Activated CD4-positive, alpha-beta T cell treated with anti-CD3 and anti-CD28 coated beads, Interleukin-2, amount 10 ng/mL, durations not matched to agents 7 days and 5 days (primary cell): ENCODE measurements at regions of chr1 and their contacts with region 1.

Region 1: GRCh38 chr1:156065212-156065611 is 4.3 kb downstream of the RAB25 start:
- DNase-seq: no peak
- H3K4me3 Mint-ChIP-seq: no peak overlapping the region
- H3K27ac Mint-ChIP-seq: no peak overlapping the region
- H3K4me1 Mint-ChIP-seq: peaks cover 16% of the 10 kb centered on the region
- H3K27me3 Mint-ChIP-seq: no peaks in the 10 kb centered on the region

Region 2: DNA sequence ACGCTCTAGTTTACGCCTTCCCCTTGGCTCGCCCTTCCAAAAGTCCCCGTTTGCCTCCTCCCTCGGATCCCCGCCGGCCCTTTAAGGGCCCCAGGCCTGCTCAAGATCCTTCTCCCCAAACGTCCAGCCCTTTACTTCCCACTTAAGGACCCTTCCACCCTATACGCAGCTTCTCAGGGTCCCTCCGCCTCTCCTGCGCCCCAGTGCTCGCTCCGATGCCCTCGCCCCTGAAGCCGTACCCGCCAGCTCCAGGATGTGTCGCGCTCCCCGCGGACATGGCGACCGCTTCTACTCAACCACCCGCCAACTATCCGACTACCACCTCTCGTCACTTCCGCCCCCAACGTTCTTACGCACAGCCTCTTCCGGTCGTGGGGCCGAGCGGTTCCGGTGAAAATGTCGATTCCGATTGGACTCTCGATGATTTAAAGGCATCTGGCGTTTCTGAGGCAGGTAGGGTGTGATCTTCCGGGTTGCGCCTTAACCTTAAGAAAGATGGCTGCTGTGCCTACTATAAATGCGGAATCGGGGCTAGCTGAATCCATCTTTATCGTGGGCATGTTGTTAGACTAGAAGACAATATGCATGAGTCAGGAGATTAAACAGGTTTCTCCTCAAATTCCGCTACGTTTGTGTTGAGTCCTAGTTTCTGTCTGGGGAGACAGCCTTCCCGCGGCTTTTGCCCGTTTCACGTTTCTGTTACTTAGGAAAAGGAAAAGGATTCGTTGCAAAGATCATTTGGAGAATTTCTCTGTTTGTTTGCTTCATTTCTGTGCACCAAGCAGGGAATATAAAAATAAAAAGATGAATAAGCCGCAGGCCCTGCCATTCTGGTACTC is 130.9 kb before region 1 on chr1 and contains the start of gene KHDC4:
- CTCF ChIA-PET with region 1: interaction called, 11 read pairs
- POLR2A ChIA-PET with region 1: no interaction called
- DNase-seq: peak; percentile 98
- H3K4me3 Mint-ChIP-seq: no peak within 1 kb of the TSS
- H3K27ac Mint-ChIP-seq: no peak within 1 kb of the TSS
- H3K4me1 Mint-ChIP-seq: peaks cover 45% of the 10 kb centered on the region
- H3K27me3 Mint-ChIP-seq: no peaks in the 10 kb centered on the region
- total RNA-seq, gene KHDC4: 66.3 to 67.3 TPM

Region 3: DNA sequence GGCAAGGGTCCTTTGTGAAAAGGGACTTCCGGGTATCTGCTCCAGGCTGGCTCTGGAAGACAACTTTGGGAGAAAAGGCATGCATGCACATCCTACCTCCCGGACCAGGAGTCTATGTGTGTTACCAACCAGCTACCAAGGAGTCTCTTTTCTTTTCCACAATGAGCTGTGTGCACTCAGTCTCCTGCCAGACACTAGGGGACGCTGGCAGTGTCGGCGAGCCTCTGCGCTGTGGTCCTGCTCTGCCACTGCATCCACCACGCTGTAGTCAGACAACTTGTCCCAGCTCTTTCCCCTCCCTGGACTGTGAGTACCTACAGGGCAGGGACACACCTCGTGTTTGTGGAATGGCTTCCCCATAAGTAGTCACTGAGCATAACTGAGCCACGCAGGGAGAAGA is 39.3 kb before region 1 on chr1:
- CTCF ChIA-PET with region 1: interaction called, 12 read pairs
- POLR2A ChIA-PET with region 1: no interaction called
- DNase-seq: peak; percentile 33
- H3K4me3 Mint-ChIP-seq: no peak overlapping the region
- H3K27ac Mint-ChIP-seq: no peak overlapping the region
- H3K4me1 Mint-ChIP-seq: peaks cover 14% of the 10 kb centered on the region
- H3K27me3 Mint-ChIP-seq: no peaks in the 10 kb centered on the region

Region 4: DNA sequence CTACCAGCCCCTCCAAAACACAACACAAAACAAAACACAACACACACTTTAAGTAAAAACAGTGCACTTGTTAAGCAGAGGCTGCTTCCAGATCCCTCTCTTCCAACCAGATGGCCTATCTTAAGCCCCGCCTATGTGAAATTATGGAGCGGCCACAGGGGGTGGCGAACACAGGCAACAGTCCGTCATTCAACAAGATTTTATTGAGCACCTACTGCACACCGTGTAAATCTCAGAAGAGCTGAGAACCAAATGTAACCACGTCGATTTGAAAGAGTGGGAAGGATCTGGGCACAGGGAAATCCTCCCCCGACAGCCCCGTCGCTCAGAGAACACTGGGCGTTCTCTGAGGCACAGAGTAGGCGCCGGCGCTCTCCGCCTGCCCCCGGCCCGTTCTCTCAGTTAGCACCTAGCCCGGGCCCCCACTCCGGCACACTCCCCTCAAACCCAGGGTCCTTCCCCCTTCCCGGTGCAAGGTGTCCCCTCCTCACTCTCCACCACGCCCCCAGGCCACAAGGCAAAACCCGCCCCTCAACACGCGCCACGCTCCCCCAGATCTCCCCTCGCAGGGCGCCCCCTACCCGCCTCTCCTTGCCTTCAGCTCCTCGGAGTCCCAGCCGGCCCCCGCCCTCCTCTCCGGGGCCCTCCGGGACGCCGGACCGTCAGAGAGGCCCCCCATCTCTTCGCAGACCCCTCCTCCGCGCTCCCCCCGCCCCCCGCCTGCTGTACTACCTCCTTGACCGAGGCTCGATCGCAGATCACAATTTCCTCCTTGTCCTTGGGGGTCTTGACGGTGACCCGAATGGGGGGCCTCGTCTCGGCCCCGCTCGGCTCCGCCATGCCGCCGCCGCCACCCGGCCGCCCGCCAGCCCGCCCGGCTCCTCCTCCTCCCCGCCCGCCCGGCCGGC is 12.1 kb before region 1 on chr1:
- CTCF ChIA-PET with region 1: interaction called, 11 read pairs
- POLR2A ChIA-PET with region 1: no interaction called
- DNase-seq: peak; percentile 75
- H3K4me3 Mint-ChIP-seq: peak overlapping the region; percentile 88
- H3K27ac Mint-ChIP-seq: peak overlapping the region; percentile 89
- H3K4me1 Mint-ChIP-seq: peaks cover 27% of the 10 kb centered on the region
- H3K27me3 Mint-ChIP-seq: no peaks in the 10 kb centered on the region

Region 5: DNA sequence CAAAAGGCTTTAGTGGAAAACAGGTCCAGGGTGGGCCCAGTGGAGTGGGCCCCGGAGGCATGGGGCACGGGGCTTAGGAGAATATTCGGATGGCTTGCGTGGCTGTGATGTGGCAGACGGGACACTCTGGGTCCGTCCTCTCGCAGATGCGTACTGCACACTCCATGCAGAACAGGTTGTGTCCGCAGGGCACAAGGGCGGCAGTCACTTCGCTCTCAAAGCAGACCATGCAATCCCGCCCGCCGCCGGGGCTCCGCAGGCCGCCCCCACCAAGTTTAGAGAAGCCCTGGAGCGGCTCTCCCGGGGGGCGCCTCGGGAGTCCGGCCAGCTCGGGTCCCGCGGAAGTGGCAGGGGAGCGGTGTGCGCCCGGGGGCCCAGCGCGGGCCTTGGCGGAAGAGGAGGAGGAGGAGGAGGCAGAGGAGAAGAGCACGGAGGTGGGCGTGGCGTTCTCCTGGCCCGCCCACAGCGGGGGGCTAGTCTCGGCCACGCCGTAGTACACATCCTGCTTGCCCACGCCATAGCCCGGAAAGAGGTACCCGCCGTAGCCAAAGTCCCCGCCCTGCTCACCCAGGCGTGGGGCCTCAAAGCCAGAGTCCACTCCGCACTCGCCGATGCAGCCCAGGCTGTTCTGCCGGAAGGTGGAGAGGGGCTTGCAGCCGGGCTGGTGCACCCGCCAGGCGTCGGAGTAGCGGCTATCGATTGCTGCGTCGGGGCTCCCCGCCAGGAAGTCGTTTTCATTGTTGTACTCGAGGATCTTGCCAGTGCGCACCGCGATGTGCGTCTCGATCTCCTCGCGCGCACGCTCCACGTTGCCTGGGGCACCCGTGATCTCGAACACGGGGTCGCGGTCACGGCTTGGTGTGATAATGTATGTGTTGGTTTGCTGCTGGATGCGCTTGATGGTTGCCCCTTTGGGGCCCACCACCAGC is 11.6 kb after region 1 on chr1:
- CTCF ChIA-PET with region 1: interaction called, 14 read pairs
- POLR2A ChIA-PET with region 1: no interaction called
- DNase-seq: no peak
- H3K4me3 Mint-ChIP-seq: no peak overlapping the region
- H3K27ac Mint-ChIP-seq: no peak overlapping the region
- H3K4me1 Mint-ChIP-seq: peaks cover 4% of the 10 kb centered on the region
- H3K27me3 Mint-ChIP-seq: peaks cover 41% of the 10 kb centered on the region

Region 6: DNA sequence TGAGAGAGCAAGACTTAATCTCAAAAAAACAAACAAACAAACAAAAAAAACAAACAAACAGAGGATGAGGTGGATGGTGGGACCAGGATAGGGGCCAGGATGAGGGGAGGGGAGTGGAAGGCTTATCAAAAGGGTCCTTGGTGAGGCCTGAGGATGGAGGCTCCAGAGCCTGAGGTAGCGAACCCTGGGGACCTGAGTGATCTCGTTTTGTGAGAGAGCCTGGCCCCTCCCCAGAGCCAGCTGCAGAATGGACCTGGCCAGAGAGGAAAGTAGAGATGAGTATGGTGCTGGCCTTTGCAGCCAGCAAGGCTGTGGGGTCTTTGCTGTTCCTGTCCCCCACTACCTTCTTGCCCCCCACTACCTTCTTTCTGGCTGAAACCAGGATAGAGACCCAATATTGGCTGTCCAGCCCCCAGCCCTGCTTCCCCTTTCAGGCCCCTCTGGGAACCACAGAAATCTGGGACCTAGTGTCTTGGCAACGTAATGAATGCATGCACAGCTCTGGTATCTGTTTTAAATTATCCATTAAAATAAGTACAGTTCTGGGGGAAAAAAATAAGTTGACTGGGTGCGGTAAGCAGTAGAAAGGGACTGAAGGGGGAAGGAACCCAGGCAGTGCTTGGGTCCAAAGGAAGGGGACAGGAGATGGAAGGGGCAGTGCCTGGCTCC is 48.2 kb after region 1 on chr1:
- CTCF ChIA-PET with region 1: no interaction called
- POLR2A ChIA-PET with region 1: no interaction called
- DNase-seq: no peak
- H3K4me3 Mint-ChIP-seq: peak overlapping the region; percentile 78
- H3K27ac Mint-ChIP-seq: no peak overlapping the region
- H3K4me1 Mint-ChIP-seq: peaks cover 30% of the 10 kb centered on the region
- H3K27me3 Mint-ChIP-seq: peaks cover 43% of the 10 kb centered on the region

Region 7: DNA sequence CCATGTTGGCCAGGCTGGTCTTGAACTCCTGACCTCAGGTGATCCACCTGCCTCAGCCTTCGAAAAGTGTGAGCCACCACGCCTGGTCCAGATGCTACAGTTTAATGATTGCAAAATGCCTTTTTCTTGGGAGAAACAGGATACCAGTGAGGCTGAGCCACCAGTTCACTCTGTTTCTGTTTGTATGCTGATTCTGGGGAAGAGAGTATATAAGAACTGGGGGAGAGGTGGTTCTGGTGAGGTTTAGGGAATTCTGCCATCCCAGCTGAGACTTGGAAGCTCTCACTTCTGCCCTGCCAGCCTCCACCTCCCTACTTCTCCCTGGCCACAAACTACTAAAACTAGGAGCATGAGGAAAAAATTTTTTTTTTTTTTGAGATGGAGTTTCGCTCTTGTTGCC is 139.5 kb after region 1 on chr1:
- CTCF ChIA-PET with region 1: no interaction called
- POLR2A ChIA-PET with region 1: no interaction called
- DNase-seq: no peak
- H3K4me3 Mint-ChIP-seq: no peak overlapping the region
- H3K27ac Mint-ChIP-seq: no peak overlapping the region
- H3K4me1 Mint-ChIP-seq: peaks cover 23% of the 10 kb centered on the region
- H3K27me3 Mint-ChIP-seq: no peaks in the 10 kb centered on the region